ENCODE measurements at regions of chr7 and their contacts with region 1.

Region 1: DNA sequence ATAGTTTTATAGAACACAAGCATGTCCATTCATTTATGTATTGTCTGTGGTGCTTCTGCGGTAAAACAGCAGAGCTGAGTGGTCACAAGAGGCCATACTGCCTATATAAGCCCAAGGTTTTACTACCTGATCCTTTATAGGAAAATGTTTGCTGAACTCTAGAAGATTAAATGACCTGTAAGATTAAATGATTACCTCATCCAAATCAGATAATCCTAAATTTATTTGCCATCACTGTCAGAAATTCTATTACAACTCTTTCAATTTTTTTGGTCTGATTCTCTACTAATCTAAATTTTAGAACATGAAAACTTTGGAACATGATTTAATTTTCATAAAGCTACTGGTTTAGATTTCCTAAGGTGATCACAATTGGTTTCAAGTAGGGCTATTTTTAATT is 35.8 kb downstream of the LMOD2 start:
- DNase-seq: no peak
- H3K4me3 ChIP-seq: no peak overlapping the region
- H3K27me3 ChIP-seq: no peaks in the 10 kb centered on the region
- CTCF ChIP-seq: no peak

Region 2: DNA sequence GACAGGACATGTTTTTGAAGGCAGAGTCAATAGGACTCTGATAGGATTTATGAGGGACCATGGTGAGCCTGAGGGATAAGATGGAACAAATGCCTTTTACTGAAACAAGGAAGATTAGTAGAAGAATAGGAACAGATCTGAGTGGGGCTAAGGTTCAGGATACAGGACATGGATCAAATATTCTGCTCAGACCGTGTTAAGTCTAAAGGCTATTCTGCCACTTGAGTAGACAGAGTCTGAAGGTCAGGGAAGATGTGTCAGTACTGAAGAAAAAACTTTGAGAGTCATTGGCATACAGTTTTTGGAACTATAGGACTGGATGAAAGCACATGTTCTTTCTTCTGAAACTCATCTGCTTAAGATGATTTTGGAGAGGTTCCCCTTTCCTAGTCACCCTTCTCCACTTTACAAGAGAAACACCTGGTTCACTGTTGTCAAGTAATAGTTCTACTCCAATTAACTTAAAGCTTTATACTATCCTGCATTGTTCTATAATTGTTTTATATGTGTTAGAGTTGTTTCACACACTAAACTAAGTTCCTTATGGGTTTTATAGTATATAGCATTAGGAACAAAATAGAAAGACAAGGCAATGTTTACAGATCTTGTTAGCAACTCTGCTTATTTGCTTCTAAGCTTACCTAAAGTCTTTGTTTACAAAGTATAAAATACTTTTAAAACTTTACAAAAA is 13.8 kb after region 1 on chr7:
- CTCF ChIA-PET with region 1: interaction called, 11 read pairs
- POLR2A ChIA-PET with region 1: no interaction called
- DNase-seq: no peak
- H3K4me3 ChIP-seq: no peak overlapping the region
- H3K27me3 ChIP-seq: no peaks in the 10 kb centered on the region
- CTCF ChIP-seq: no peak

Measured in BJ (cell line).